Gastrocnemius medialis (tissue), 4 donors: ENCODE measurements at regions of chr3 and their contacts with region 1.

Region 1: DNA sequence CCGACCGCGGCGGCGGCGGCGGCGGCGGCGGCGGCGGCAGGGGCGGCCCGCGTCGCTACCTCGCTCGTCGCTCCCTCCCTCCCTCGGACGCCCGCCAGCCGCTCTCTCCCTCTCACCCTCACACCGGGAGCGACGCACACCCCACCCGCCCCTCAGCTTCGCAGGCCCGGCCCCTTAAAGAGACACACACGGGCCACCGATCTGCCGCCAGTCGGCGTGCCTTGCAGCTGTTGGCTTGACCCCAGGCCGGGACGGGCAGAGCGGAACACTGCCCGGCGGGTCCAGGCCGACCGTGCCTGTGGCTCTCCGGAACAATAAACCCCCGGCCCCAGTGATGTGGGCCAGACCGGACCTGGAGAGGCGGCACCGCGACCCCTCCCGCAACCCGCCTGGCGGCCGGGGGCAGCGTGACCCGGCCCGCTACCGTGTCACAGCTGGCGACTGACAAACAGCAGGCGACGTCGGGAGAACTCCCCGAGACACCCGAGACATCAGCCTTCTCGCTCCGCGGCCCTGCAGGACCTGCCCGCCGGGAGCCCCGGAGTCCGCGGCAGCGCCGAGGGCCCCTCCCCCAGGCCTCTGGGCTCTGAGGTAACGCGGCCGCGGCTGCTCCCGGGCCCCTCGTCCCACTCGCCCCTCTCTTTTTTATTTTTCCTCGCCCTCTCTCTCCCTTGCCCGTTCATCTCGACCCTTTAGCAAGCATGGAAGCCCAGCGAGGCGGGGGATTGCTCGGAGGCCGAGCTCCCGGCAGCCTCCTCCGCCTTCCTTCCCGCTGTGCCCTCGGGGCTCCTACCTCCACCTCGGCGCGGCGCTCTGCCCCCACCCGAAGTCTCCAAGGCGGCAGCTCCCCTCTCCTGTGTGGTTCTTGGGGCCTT is at the start of gene SETD2:
- DNase-seq: peak; percentile 95 to 97
- ATAC-seq: peak; percentile 82 to 88
- H3K4me3 ChIP-seq: peak within 1 kb of the TSS; percentile 83 to 95 (median 88)
- H3K27ac ChIP-seq: peak within 1 kb of the TSS; percentile 96 to 99 (median 97)
- H3K4me1 ChIP-seq: peaks cover 51% of the 10 kb centered on the region in 2 donors
- H3K27me3 ChIP-seq: no peaks in the 10 kb centered on the region
- CTCF ChIP-seq: peak; percentile 18 to 62 (median 49)
- POLR2A ChIP-seq: peak; percentile 76 to 87
- total RNA-seq, gene SETD2: 35.7 to 48.5 (median 40.4) TPM

Region 2: GRCh38 chr3:46976326-46977190 is 187.7 kb before region 1 on chr3 and contains the start of gene CCDC12:
- in situ Hi-C with region 1: no loop called
- intact Hi-C with region 1: loop called (anchors 2 kb)
- DNase-seq: peak; percentile 98 to 99
- ATAC-seq: peak; percentile 89 to 92
- H3K4me3 ChIP-seq: peak within 1 kb of the TSS; percentile 75 to 94 (median 88)
- H3K27ac ChIP-seq: peak within 1 kb of the TSS; percentile 93 to 98 (median 95)
- H3K4me1 ChIP-seq: peaks cover 44 to 50% of the 10 kb centered on the region in 2 donors
- H3K27me3 ChIP-seq: no peaks in the 10 kb centered on the region
- CTCF ChIP-seq: no peak
- POLR2A ChIP-seq: peak; percentile 89 to 95
- total RNA-seq, gene CCDC12: 24.6 to 32.0 (median 29.0) TPM

Region 3: DNA sequence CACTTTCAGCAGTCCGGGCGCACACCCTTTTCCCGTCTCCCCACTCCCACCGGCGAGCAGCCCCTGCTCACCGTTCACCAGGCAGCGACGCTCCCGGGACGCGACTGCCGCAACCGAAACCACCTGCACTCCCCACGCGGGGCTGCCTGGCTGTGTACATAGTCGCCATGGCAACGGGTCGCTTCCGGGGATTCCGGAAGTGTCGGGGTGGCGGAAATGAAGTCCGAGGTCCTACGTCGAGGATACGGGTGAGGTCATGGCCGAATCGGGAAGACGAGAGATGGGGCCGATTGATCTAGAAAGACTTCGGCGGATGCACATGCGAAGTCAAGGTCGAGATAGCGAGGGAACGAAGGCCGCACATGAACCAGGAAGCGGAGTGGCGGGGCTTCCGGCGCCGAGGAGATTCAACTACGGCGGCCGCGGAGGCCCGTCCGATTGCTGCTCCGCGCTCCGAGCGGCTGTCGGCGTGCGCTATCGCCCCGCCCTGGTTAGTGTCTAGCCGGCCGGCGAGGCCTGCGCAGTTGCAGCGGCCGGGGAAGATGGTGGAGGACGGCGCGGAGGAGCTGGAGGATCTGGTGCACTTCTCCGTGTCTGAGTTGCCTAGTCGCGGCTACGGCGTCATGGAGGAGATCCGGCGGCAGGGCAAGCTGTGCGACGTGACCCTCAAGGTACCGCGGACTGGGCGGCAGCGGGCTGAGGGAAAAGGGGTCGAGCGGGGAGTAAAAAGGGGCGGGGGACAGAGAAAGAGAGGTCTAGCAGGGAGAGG is 118.4 kb after region 1 on chr3 and contains the starts of genes KIF9 and KLHL18:
- in situ Hi-C with region 1: no loop called
- intact Hi-C with region 1: loop called (anchors 1 kb)
- DNase-seq: peak; percentile 86 to 90
- ATAC-seq: peak; percentile 96 to 97
- H3K4me3 ChIP-seq: peak within 1 kb of the TSS; percentile 70 to 92 (median 86)
- H3K27ac ChIP-seq: peak within 1 kb of the TSS; percentile 86 to 93 (median 91)
- H3K4me1 ChIP-seq: peaks cover 25 to 40% of the 10 kb centered on the region in 2 donors
- H3K27me3 ChIP-seq: no peaks in the 10 kb centered on the region
- CTCF ChIP-seq: peak in 1 of 5 experiments; percentile 29
- POLR2A ChIP-seq: peak; percentile 60 to 78
- total RNA-seq, gene KIF9: 2.9 to 10.8 (median 8.0) TPM
- total RNA-seq, gene KLHL18: 19.0 to 26.3 (median 22.4) TPM

Region 4: GRCh38 chr3:47475570-47476329 is 311.5 kb after region 1 on chr3 and contains the start of gene SCAP:
- in situ Hi-C with region 1: no loop called
- intact Hi-C with region 1: loop called (anchors 10 kb)
- DNase-seq: peak; percentile 89 to 92
- ATAC-seq: peak; percentile 94 to 95
- H3K4me3 ChIP-seq: peak within 1 kb of the TSS; percentile 74 to 100 (median 90)
- H3K27ac ChIP-seq: peak within 1 kb of the TSS; percentile 77 to 95 (median 90)
- H3K4me1 ChIP-seq: peaks cover 22 to 27% of the 10 kb centered on the region in 2 donors
- H3K27me3 ChIP-seq: no peaks in the 10 kb centered on the region
- CTCF ChIP-seq: peak; percentile 92 to 100 (median 96)
- POLR2A ChIP-seq: peak; percentile 66 to 79
- total RNA-seq, gene SCAP: 38.2 to 48.1 (median 42.8) TPM